Activated CD4-positive, alpha-beta T cell treated with anti-CD3 and anti-CD28 coated beads for 36 hours (primary cell): ENCODE measurements at regions of chr9 and their contacts with region 1.

Region 1: DNA sequence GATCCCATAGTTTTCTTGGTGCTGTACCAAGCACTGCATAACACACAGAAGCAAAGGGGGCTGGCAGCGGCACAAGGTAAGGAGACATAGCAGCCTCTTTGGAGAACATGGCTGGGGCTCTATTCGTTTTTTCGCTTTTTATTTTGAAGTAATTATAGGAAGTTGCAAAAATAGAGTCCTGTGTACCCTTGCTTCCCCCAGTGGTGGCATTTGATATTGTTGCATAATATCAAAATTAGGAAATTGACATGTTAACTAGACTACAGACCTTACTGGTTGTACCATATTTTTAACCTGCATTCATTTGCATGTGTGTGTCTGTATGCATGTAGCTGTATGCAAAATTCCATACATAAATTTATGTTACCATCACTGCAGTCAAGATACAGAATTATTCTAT is 6.6 kb upstream of the UBQLN1 start:
- DNase-seq: no peak
- ATAC-seq: peak; percentile 42
- H3K4me3 Mint-ChIP-seq: no peak overlapping the region
- H3K27ac Mint-ChIP-seq: no peak overlapping the region
- H3K4me1 Mint-ChIP-seq: peaks cover 2% of the 10 kb centered on the region
- H3K27me3 Mint-ChIP-seq: no peaks in the 10 kb centered on the region

Region 2: GRCh38 chr9:83572524-83572923 is 141.8 kb before region 1 on chr9:
- CTCF ChIA-PET with region 1: no interaction called
- POLR2A ChIA-PET with region 1: no interaction called
- intact Hi-C with region 1: no loop called
- DNase-seq: no peak
- ATAC-seq: no peak
- H3K4me3 Mint-ChIP-seq: no peak overlapping the region
- H3K27ac Mint-ChIP-seq: no peak overlapping the region
- H3K4me1 Mint-ChIP-seq: no peaks in the 10 kb centered on the region
- H3K27me3 Mint-ChIP-seq: no peaks in the 10 kb centered on the region

Region 3: DNA sequence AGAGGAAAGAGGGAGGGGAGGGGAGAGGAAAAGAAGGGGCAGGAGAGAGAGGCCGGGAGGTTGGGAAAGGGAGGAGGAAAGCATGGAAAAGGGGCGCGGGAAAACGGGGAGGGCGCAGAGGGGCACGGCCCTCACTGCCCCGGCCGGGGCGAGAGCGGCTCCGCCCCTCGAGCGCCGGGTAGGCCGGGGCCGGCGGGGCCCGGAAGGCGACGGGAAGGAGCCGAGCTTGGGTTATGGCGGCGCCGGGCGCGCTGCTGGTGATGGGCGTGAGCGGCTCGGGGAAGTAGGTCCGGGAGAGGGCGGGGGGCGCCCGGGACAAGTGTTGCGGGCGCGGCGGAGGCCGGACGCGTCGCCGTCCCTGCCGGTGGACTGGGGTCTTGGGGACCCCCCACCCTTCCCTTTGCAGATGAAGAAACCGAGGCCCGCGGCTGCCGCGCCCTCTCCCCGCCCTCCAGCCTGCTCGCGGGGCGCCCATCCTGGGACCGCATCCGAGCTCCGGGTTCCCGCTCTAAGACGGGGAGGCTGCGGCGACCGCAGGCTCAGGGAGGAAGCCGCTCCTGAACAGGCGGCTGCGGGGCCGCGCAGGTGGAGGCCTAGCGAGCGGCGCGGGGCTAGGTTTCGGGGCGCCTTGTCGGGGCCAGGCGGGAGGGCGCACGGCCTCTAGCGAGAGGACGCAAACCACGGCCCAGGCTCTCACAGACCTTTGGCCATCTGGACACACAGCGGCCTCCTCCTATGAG is 91.2 kb before region 1 on chr9 and contains the start of gene IDNK:
- CTCF ChIA-PET with region 1: interaction called, 6 read pairs
- POLR2A ChIA-PET with region 1: interaction called, 3 read pairs
- intact Hi-C with region 1: loop called in 1 of 2 experiments (anchors 2 kb)
- DNase-seq: peak; percentile 77
- ATAC-seq: peak; percentile 89
- H3K4me3 Mint-ChIP-seq: peak within 1 kb of the TSS; percentile 80
- H3K27ac Mint-ChIP-seq: peak within 1 kb of the TSS; percentile 98
- H3K4me1 Mint-ChIP-seq: peaks cover 23% of the 10 kb centered on the region
- H3K27me3 Mint-ChIP-seq: no peaks in the 10 kb centered on the region
- total RNA-seq, gene IDNK: 4.6 to 4.7 TPM